Activated CD8-positive, alpha-beta T cell treated with anti-CD3 and anti-CD28 coated beads for 36 hours (primary cell): ENCODE measurements at regions of chr5 and their contacts with region 1.

Region 1: DNA sequence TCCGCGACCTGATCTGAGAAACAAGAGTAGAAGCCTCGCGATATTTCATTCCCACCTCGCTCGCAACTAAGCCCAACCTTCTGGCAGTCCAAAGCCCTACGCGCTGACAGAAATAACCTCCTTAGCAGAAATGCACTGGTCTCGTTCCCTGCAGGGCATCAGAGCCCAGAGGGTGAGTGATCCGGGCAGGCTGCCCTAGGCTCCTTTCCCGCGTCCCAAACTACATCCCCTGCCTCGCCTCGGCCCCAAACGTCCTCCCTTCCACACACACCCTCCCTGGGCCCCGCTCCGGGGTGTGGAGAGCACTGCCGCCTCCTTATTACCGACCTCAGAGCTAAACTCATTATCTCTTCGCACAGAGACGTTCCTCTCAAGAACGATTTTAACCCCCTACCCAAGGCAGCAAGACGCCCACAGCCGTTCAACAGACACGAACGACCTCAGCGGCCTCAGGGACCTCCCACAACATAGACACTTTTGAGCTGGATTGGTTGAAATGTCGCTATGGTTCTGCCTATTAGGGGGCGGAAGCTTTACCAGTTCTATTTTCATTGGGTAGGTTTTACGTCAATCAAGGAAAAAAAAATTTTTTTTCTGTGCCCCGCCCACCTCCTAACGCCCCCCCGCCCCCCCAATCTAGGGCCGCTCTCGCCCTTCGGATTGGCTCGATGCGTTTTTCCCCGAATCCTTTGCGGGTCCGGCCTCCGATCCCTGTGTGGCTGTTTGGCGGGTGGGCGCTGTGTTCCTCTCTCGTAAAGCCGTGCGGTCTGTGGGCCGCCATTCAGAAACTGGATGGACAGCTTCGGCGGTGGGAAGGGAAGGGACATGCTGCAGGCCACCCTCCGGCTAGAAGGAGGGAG is at the start of gene CETN3:
- DNase-seq: peak; percentile 94
- ATAC-seq: peak; percentile 94
- H3K4me3 Mint-ChIP-seq: no peak within 1 kb of the TSS
- H3K27ac Mint-ChIP-seq: no peak within 1 kb of the TSS
- H3K4me1 Mint-ChIP-seq: peaks cover 17% of the 10 kb centered on the region
- H3K27me3 Mint-ChIP-seq: no peaks in the 10 kb centered on the region
- CTCF ChIP-seq: no peak
- total RNA-seq, gene CETN3: 46.1 to 49.2 TPM

Region 2: GRCh38 chr5:90368454-90369246 is 40.9 kb before region 1 on chr5:
- CTCF ChIA-PET with region 1: no interaction called
- POLR2A ChIA-PET with region 1: no interaction called
- intact Hi-C with region 1: no loop called
- DNase-seq: no peak
- ATAC-seq: no peak
- H3K4me3 Mint-ChIP-seq: no peak overlapping the region
- H3K27ac Mint-ChIP-seq: no peak overlapping the region
- H3K4me1 Mint-ChIP-seq: no peaks in the 10 kb centered on the region
- H3K27me3 Mint-ChIP-seq: peaks cover 20% of the 10 kb centered on the region
- CTCF ChIP-seq: no peak

Region 3: GRCh38 chr5:90438100-90438499 is 28.6 kb after region 1 on chr5:
- CTCF ChIA-PET with region 1: interaction called, 11 read pairs
- POLR2A ChIA-PET with region 1: interaction called, 3 read pairs
- intact Hi-C with region 1: no loop called
- DNase-seq: no peak
- ATAC-seq: no peak
- H3K4me3 Mint-ChIP-seq: no peak overlapping the region
- H3K27ac Mint-ChIP-seq: no peak overlapping the region
- H3K4me1 Mint-ChIP-seq: peaks cover 5% of the 10 kb centered on the region
- H3K27me3 Mint-ChIP-seq: no peaks in the 10 kb centered on the region
- CTCF ChIP-seq: no peak

Region 4: GRCh38 chr5:90474235-90475109 is 64.9 kb after region 1 on chr5 and contains the starts of genes MBLAC2 and POLR3G:
- CTCF ChIA-PET with region 1: interaction called, 4 read pairs
- POLR2A ChIA-PET with region 1: interaction called, 17 read pairs
- intact Hi-C with region 1: no loop called
- DNase-seq: peak; percentile 95
- ATAC-seq: peak; percentile 93
- H3K4me3 Mint-ChIP-seq: peak within 1 kb of the TSS; percentile 97
- H3K27ac Mint-ChIP-seq: peak within 1 kb of the TSS; percentile 95
- H3K4me1 Mint-ChIP-seq: peaks cover 35% of the 10 kb centered on the region
- H3K27me3 Mint-ChIP-seq: no peaks in the 10 kb centered on the region
- CTCF ChIP-seq: peak; percentile 64
- total RNA-seq, gene MBLAC2: 4.9 to 5.2 TPM
- total RNA-seq, gene POLR3G: 24.0 to 27.1 TPM

Region 5: GRCh38 chr5:90506221-90506620 is 96.7 kb after region 1 on chr5:
- CTCF ChIA-PET with region 1: no interaction called
- POLR2A ChIA-PET with region 1: no interaction called
- intact Hi-C with region 1: no loop called
- DNase-seq: no peak
- ATAC-seq: no peak
- H3K4me3 Mint-ChIP-seq: no peak overlapping the region
- H3K27ac Mint-ChIP-seq: no peak overlapping the region
- H3K4me1 Mint-ChIP-seq: peaks cover 8% of the 10 kb centered on the region
- H3K27me3 Mint-ChIP-seq: no peaks in the 10 kb centered on the region
- CTCF ChIP-seq: no peak